GM12878 (cell line): ENCODE measurements at regions of chr22 and their contacts with region 1.

Region 1: DNA sequence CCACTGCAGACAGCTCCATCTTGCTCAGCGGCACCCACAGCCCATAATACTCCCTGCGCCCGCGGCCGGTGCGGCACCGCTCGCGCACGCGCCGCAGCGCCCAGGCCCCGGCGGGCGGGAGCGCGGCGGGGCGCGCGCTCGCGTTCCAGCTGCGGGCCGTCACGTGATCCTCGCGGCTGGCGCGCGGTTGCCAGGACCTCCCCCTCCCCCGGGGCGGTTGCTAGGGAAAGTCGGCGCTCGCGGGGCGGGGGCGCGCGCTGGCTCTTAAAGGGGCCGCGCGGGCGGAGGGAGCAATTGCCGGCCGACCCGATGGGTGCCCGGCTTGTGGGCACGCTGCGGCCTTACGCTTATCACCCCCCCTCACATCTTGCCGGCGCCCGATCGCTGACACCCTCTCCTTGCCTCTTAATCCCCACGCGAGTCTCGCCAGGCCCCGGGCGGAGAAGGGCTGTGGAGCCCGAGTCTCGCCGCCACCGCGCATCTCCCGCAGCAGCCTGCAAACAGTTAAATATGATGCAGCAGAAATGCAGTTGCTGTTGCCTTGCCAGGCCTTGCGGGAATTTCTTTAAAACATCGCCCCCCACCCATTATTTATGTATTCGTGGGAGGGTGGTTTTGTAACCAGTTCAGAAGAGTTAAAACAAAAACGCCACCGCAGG is at the start of gene CBX6:
- DNase-seq: peak; percentile 37
- ATAC-seq: peak; percentile 42
- H3K4me3 ChIP-seq: peak within 1 kb of the TSS; percentile 89
- H3K27ac ChIP-seq: peak within 1 kb of the TSS; percentile 83
- H3K4me1 ChIP-seq: peaks cover 29% of the 10 kb centered on the region
- H3K27me3 ChIP-seq: no peaks in the 10 kb centered on the region
- CTCF ChIP-seq: no peak
- EP300 ChIP-seq: peak in 1 of 2 experiments; percentile 65; a peak in 1 of 4 replicates
- POLR2A ChIP-seq: peak; percentile 81
- RAD21 ChIP-seq: no peak
- polyA plus RNA-seq, gene CBX6: 3.6 to 4.5 TPM

Region 2: DNA sequence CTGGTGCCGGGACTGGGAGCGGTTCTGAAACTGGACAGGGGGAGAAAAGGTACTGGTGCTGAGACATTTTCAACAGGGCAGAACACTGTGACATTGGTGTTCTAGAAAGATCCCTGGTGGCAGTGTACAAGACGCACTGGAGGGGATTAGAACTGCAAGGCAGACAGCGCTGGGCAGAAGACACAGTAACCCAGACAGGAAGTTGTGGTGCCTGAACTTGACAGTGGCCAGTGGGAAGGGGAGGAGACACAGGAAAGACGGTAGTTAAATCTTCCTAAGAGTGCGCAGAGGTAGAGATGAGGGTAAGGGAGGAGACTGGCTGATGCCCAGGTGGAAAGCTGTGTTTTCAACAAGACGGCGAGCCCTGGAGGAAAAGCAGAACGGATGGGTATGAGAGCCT is 240.6 kb before region 1 on chr22:
- CTCF ChIA-PET with region 1: no interaction called
- POLR2A ChIA-PET with region 1: no interaction called
- RAD21 ChIA-PET with region 1: no interaction called
- SMC1A ChIA-PET with region 1: no interaction called
- in situ Hi-C with region 1: no loop called
- intact Hi-C with region 1: no loop called
- DNase-seq: no peak
- ATAC-seq: no peak
- H3K4me3 ChIP-seq: no peak overlapping the region
- H3K27ac ChIP-seq: no peak overlapping the region
- H3K4me1 ChIP-seq: no peaks in the 10 kb centered on the region
- H3K27me3 ChIP-seq: peaks cover 0 to 3% of the 10 kb centered on the region in 2 experiments; a peak in 2 of 4 replicates
- CTCF ChIP-seq: no peak
- EP300 ChIP-seq: no peak
- POLR2A ChIP-seq: no peak
- RAD21 ChIP-seq: no peak

Region 3: GRCh38 chr22:38766076-38766777 is 106.1 kb before region 1 on chr22:
- CTCF ChIA-PET with region 1: interaction called, 33 read pairs
- POLR2A ChIA-PET with region 1: interaction called, 3 read pairs
- RAD21 ChIA-PET with region 1: interaction called, 19 read pairs
- SMC1A ChIA-PET with region 1: interaction called, 10 read pairs
- in situ Hi-C with region 1: no loop called
- intact Hi-C with region 1: no loop called
- DNase-seq: no peak
- ATAC-seq: peak; percentile 75
- H3K4me3 ChIP-seq: no peak overlapping the region
- H3K27ac ChIP-seq: no peak overlapping the region
- H3K4me1 ChIP-seq: peaks cover 2% of the 10 kb centered on the region; the same call in 1 of the 2 replicates
- H3K27me3 ChIP-seq: no peaks in the 10 kb centered on the region; a peak in 1 of 4 replicates
- CTCF ChIP-seq: peak; percentile 70 to 86 (median 71)
- EP300 ChIP-seq: no peak
- POLR2A ChIP-seq: no peak
- RAD21 ChIP-seq: no peak

Region 4: GRCh38 chr22:38927033-38927781 is 54.9 kb after region 1 on chr22:
- CTCF ChIA-PET with region 1: interaction called, 15 read pairs
- POLR2A ChIA-PET with region 1: no interaction called
- RAD21 ChIA-PET with region 1: interaction called, 5 read pairs
- SMC1A ChIA-PET with region 1: no interaction called
- in situ Hi-C with region 1: no loop called
- intact Hi-C with region 1: no loop called
- DNase-seq: peak; percentile 7
- ATAC-seq: peak; percentile 96
- H3K4me3 ChIP-seq: no peak overlapping the region
- H3K27ac ChIP-seq: no peak overlapping the region
- H3K4me1 ChIP-seq: no peaks in the 10 kb centered on the region
- H3K27me3 ChIP-seq: peaks cover 1 to 7% of the 10 kb centered on the region in 2 experiments; a peak in 2 of 4 replicates
- CTCF ChIP-seq: peak; percentile 57 to 70 (median 65)
- EP300 ChIP-seq: no peak
- POLR2A ChIP-seq: no peak
- RAD21 ChIP-seq: peak; percentile 48

Region 5: DNA sequence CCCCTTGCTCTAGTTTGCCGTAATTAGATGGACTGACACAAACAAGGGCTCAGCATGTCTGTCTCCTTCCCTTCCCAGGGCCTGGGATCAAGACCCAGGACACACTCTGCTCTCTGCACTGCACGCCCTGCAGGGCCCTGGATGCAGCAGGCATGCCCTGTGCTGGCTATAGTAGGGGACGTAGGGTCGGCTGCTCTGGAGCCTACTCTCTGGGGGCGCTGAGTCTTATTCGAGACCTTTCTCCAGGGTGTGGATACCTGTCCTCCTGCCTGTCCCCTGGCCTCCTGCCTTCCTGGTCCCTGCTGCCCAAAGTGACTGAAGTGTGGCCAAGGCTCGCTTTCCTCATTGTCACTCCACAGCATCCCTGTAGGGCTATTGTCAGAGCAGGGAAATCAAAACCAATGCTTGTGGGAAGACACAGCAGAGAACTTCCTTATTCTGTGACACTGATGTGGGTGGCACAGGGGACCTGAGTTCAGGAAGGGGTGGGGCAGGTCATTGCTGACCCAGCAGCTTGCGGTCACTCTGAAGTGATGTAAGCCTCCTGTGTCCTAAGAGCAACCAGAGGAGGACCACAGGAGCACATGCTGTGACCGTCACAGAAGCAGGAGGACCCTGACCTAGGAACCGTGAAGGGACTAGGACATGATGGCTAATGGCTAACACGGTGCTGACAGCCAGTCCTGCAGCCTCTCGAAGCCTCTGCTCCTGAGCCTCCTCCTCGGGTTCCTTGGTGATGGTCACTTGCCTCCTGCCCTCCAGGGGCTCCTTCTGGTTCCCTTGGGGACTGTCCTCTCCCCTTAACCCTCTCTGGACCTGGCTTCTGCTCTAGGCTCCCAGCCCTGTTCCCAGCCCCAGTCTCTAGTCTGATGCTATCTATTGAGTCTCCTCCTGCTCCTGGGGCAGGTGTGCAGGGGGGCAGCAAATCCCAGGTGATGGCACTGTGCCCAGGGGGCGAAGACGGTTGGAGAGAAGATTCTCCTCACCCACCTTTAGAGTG is 95.5 kb after region 1 on chr22:
- CTCF ChIA-PET with region 1: interaction called, 73 read pairs
- POLR2A ChIA-PET with region 1: interaction called, 3 read pairs
- RAD21 ChIA-PET with region 1: interaction called, 8 read pairs
- SMC1A ChIA-PET with region 1: interaction called, 12 read pairs
- in situ Hi-C with region 1: no loop called
- intact Hi-C with region 1: no loop called
- DNase-seq: no peak
- ATAC-seq: peak; percentile 75
- H3K4me3 ChIP-seq: no peak overlapping the region
- H3K27ac ChIP-seq: no peak overlapping the region
- H3K4me1 ChIP-seq: peaks cover 9% of the 10 kb centered on the region
- H3K27me3 ChIP-seq: no peaks in the 10 kb centered on the region; a peak in 1 of 4 replicates
- CTCF ChIP-seq: no peak
- EP300 ChIP-seq: no peak
- POLR2A ChIP-seq: no peak
- RAD21 ChIP-seq: no peak

Region 6: DNA sequence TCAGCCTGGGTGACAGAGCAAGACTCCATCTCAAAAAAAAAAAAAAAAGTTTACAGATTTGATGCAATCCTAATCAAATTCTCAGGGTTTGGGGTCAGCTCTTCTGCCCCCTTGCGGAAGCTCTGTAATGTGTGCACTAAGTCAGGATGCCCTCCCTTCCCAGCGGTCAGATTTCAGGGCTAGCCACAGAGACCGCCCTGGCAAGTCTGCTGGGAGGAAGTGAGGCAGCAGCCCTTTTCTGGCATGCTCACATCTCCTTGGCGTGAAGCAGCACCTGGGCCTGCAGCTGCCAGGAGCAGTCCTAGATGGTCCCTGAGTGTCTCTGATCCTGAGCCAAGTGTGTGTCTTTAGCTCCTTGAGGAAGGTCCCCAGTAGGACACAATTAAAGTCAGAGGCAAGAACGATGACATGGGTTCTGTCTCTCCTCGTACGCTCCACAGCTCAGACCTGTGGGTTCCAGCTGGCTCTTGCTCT is 130.9 kb after region 1 on chr22:
- CTCF ChIA-PET with region 1: interaction called, 192 read pairs
- POLR2A ChIA-PET with region 1: interaction called, 16 read pairs
- RAD21 ChIA-PET with region 1: interaction called, 93 read pairs
- SMC1A ChIA-PET with region 1: interaction called, 83 read pairs
- in situ Hi-C with region 1: loop called (anchors 5 kb)
- intact Hi-C with region 1: loop called (anchors 1 kb)
- DNase-seq: peak; percentile 81
- ATAC-seq: peak; percentile 99
- H3K4me3 ChIP-seq: no peak overlapping the region
- H3K27ac ChIP-seq: no peak overlapping the region
- H3K4me1 ChIP-seq: peaks cover 7% of the 10 kb centered on the region
- H3K27me3 ChIP-seq: no peaks in the 10 kb centered on the region
- CTCF ChIP-seq: peak; percentile 69 to 76 (median 75)
- EP300 ChIP-seq: no peak
- POLR2A ChIP-seq: no peak
- RAD21 ChIP-seq: peak; percentile 74

Region 7: GRCh38 chr22:39123751-39124601 is 251.7 kb after region 1 on chr22:
- CTCF ChIA-PET with region 1: interaction called, 26 read pairs
- POLR2A ChIA-PET with region 1: interaction called, 7 read pairs
- RAD21 ChIA-PET with region 1: interaction called, 4 read pairs
- SMC1A ChIA-PET with region 1: interaction called, 5 read pairs
- in situ Hi-C with region 1: loop called (anchors 5 kb)
- intact Hi-C with region 1: loop called (anchors 5 kb)
- DNase-seq: no peak
- ATAC-seq: no peak
- H3K4me3 ChIP-seq: no peak overlapping the region
- H3K27ac ChIP-seq: no peak overlapping the region
- H3K4me1 ChIP-seq: no peaks in the 10 kb centered on the region
- H3K27me3 ChIP-seq: no peaks in the 10 kb centered on the region
- CTCF ChIP-seq: no peak
- EP300 ChIP-seq: no peak
- POLR2A ChIP-seq: no peak
- RAD21 ChIP-seq: no peak

Region 8: GRCh38 chr22:39341179-39341578 is 468.9 kb after region 1 on chr22:
- CTCF ChIA-PET with region 1: no interaction called
- POLR2A ChIA-PET with region 1: no interaction called
- RAD21 ChIA-PET with region 1: no interaction called
- SMC1A ChIA-PET with region 1: no interaction called
- in situ Hi-C with region 1: no loop called
- intact Hi-C with region 1: no loop called
- DNase-seq: no peak
- ATAC-seq: no peak
- H3K4me3 ChIP-seq: no peak overlapping the region
- H3K27ac ChIP-seq: no peak overlapping the region
- H3K4me1 ChIP-seq: no peaks in the 10 kb centered on the region
- H3K27me3 ChIP-seq: peaks cover 0 to 1% of the 10 kb centered on the region in 2 experiments; a peak in 2 of 4 replicates
- CTCF ChIP-seq: no peak
- EP300 ChIP-seq: no peak
- POLR2A ChIP-seq: no peak
- RAD21 ChIP-seq: no peak